ENCODE measurements at regions of chr1 and their contacts with region 1.

Region 1: GRCh38 chr1:19067182-19067911 is 110.9 kb upstream of the IFFO2 start:
- DNase-seq: peak; percentile 54 to 60
- H3K4me3 ChIP-seq: no peak overlapping the region
- H3K27ac ChIP-seq: peak overlapping the region; percentile 62; the same call in 1 of the 2 replicates
- H3K4me1 ChIP-seq: peaks cover 21% of the 10 kb centered on the region
- H3K27me3 ChIP-seq: no peaks in the 10 kb centered on the region
- CTCF ChIP-seq: no peak

Region 2: GRCh38 chr1:19033861-19034680 is 33.3 kb before region 1 on chr1:
- CTCF ChIA-PET with region 1: no interaction called
- POLR2A ChIA-PET with region 1: no interaction called
- intact Hi-C with region 1: loop called (anchors 5 kb)
- DNase-seq: peak; percentile 66 to 79
- H3K4me3 ChIP-seq: no peak overlapping the region
- H3K27ac ChIP-seq: no peak overlapping the region
- H3K4me1 ChIP-seq: peaks cover 28% of the 10 kb centered on the region
- H3K27me3 ChIP-seq: no peaks in the 10 kb centered on the region
- CTCF ChIP-seq: no peak

Region 3: GRCh38 chr1:19439464-19440171 is 372.3 kb after region 1 on chr1:
- CTCF ChIA-PET with region 1: interaction called, 11 read pairs
- POLR2A ChIA-PET with region 1: no interaction called
- intact Hi-C with region 1: no loop called
- DNase-seq: no peak
- H3K4me3 ChIP-seq: no peak overlapping the region
- H3K27ac ChIP-seq: no peak overlapping the region
- H3K4me1 ChIP-seq: peaks cover 14% of the 10 kb centered on the region
- H3K27me3 ChIP-seq: no peaks in the 10 kb centered on the region
- CTCF ChIP-seq: no peak

Measured in PC-9 (cell line).